ENCODE measurements at regions of chr3 and their contacts with region 1.

Region 1: DNA sequence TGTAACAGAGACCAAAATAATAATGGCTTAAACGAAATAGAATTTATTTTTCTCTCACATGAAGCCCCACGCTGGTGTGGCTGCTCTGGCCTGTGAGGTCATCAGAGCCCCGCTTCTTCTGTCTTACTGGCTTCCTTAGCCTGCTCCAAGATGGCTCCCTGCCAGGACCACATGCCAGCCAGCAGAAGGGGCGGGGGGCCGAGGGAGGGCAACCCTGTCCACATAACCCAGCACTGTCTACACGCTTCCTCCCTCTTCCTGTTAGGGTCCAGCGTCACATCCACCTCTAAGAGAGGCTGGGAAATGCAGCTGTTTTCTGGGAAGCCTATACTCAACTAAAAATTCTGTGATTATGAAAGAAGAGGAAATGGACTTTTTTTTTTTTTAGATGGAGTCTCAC is 107.9 kb upstream of the DLG1 start:
- DNase-seq: no peak
- H3K4me3 ChIP-seq: no peak overlapping the region
- H3K4me3 Mint-ChIP-seq: no peak overlapping the region
- H3K27ac Mint-ChIP-seq: no peak overlapping the region
- H3K4me1 ChIP-seq: no peaks in the 10 kb centered on the region
- H3K4me1 Mint-ChIP-seq: no peaks in the 10 kb centered on the region
- H3K27me3 ChIP-seq: no peaks in the 10 kb centered on the region
- H3K27me3 Mint-ChIP-seq: no peaks in the 10 kb centered on the region
- CTCF ChIP-seq: no peak

Region 2: DNA sequence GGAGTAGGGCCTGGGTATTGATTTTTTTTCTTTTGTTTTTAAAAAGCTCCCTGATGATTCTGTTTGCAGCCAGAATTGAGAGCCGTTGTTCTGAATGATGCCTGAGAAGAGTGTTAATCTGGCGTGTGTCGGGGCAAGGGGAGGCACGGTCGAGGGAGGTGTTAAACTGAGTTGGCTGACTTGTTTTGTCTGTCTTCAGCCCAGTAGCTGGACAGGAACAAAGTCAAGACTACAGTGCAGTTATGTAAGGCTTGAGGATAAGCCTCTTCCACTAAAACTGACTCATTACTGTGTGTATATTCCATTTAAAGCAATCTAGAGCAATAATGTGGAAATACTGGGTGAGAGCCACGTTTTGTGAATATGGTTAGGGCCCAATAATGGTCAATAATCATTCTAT is 11.2 kb after region 1 on chr3:
- CTCF ChIA-PET with region 1: interaction called, 3 read pairs
- POLR2A ChIA-PET with region 1: interaction called, 19 read pairs
- intact Hi-C with region 1: no loop called
- DNase-seq: no peak
- H3K4me3 ChIP-seq: no peak overlapping the region
- H3K4me3 Mint-ChIP-seq: no peak overlapping the region
- H3K27ac Mint-ChIP-seq: no peak overlapping the region
- H3K4me1 ChIP-seq: peaks cover 4% of the 10 kb centered on the region; the same call in 1 of the 2 replicates
- H3K4me1 Mint-ChIP-seq: no peaks in the 10 kb centered on the region
- H3K27me3 ChIP-seq: no peaks in the 10 kb centered on the region
- H3K27me3 Mint-ChIP-seq: no peaks in the 10 kb centered on the region
- CTCF ChIP-seq: no peak

Measured in Caco-2 (cell line).